HEK293 (cell line): ENCODE measurements at regions of chr2 and their contacts with region 1.

Region 1: DNA sequence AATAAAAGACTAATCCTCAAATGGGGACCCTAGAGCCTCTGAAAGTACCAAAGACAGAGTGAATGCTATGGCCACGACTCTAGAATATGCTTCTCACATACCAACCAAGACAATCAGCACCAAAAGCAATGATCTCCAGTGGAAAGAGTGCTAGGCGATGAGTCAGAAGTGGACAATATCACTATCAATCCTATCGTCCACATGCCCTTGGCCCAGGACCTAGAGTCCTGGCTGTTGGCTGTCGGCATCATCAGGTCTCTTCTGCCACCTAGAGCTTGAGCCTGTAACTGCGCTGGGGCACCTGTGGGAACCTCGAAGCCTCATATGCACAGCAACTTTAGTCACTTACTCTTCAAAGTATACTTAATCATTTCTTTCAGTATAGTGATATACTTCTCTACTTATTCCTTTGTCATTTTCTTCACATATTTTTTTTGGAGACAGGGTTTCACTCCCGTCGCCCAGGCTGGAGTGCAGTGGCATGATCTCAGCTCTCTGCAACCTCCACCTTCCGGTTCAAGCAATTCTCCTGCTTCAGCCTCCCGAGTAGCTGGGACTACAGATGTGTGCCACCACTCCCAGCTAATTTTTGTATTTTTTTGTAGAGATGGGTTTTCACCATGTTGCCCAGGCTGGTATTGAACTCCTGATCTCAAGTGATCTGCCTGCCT is 29.7 kb downstream of the NOL10 start:
- H3K4me3 ChIP-seq: no peak overlapping the region
- H3K27ac ChIP-seq: no peak overlapping the region
- H3K4me1 ChIP-seq: no peaks in the 10 kb centered on the region
- CTCF ChIP-seq: no peak

Region 2: DNA sequence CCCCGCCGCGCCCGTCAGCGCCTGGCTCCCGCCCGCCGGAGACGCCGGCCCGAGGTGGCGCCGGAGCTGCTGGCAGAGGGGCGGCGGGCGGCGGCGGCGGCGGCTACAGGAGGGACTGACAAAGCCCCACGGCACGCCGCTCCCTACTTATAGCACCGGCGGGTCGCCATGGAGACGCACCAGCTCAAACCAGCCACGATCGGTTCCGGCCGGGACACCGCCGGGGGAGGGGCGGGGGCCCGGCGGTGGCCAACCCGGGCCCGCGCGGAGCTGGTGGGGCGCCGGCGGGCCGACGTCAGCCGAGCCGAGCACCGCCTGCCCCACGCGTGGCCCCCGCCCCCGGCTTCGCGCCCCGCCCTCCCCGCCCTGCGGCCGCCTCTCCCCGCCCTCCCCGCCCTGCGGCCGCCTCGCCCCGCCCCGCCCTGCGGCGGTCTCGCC is 211.8 kb before region 1 on chr2 and contains the start of gene ODC1:
- CTCF ChIA-PET with region 1: interaction called, 16 read pairs
- POLR2A ChIA-PET with region 1: interaction called, 10 read pairs
- H3K4me3 ChIP-seq: peak within 1 kb of the TSS; percentile 44
- H3K27ac ChIP-seq: peak within 1 kb of the TSS; percentile 86
- H3K4me1 ChIP-seq: peaks cover 11% of the 10 kb centered on the region
- CTCF ChIP-seq: no peak

Region 3: GRCh38 chr2:10533811-10534321 is 126.2 kb before region 1 on chr2:
- CTCF ChIA-PET with region 1: no interaction called
- POLR2A ChIA-PET with region 1: no interaction called
- H3K4me3 ChIP-seq: no peak overlapping the region
- H3K27ac ChIP-seq: no peak overlapping the region
- H3K4me1 ChIP-seq: no peaks in the 10 kb centered on the region
- CTCF ChIP-seq: no peak